ENCODE measurements at regions of chr1 and their contacts with region 1.

Region 1: GRCh38 chr1:118151312-118151937 is 33.6 kb downstream of the SPAG17 start:
- DNase-seq: peak; percentile 41
- ATAC-seq: no peak

Region 2: DNA sequence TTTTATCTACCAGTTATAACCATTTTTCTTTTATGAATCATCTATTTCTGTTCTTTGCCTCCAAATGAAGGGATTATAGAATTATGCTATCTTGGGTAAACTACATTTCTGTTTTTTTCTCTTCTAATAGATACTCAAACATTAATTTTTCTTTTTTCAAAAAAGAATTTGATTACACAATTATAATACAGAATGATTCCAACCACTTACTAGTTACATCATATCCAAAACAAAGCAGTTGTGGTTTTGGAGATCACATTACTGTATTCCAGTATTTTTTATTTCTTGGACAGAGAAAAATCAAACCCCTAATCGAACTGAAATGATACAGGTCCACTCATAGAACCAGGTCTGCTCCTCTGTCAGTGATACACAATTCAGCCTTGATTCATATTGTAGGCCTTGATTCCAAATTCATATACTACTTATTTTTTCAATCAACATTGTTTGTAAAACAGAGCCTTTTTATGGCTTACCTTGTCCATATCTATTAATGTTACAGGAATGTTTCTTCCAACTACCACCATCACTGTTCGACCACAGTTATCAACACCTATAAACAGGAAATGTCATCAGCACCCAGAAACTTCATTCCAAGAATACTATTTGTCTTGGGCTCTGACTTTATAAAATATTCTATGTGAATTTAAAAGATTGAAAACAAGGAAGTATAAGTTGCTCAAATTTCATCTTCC is 265.2 kb before region 1 on chr1:
- intact Hi-C with region 1: no loop called
- DNase-seq: no peak
- ATAC-seq: no peak

Region 3: DNA sequence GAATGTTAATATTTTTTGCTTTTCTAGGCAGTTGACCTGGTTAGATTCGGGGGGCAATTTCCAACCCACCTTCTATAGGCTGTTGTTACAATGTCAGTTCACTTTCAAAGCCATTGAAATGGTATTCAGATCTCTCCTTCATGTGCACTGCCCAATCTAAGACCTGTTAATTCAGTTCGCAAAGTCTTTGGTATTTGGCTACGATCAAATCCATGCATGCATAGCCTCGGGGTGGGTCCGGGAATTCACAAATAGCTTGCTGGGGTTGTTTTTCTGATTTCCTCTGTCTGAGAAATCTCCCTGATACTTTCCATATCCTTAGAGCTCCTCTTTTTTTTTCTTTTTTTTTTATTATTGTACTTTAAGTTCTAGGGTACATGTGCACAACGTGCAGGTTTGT is 286.2 kb after region 1 on chr1:
- intact Hi-C with region 1: no loop called
- DNase-seq: no peak
- ATAC-seq: no peak

Region 4: DNA sequence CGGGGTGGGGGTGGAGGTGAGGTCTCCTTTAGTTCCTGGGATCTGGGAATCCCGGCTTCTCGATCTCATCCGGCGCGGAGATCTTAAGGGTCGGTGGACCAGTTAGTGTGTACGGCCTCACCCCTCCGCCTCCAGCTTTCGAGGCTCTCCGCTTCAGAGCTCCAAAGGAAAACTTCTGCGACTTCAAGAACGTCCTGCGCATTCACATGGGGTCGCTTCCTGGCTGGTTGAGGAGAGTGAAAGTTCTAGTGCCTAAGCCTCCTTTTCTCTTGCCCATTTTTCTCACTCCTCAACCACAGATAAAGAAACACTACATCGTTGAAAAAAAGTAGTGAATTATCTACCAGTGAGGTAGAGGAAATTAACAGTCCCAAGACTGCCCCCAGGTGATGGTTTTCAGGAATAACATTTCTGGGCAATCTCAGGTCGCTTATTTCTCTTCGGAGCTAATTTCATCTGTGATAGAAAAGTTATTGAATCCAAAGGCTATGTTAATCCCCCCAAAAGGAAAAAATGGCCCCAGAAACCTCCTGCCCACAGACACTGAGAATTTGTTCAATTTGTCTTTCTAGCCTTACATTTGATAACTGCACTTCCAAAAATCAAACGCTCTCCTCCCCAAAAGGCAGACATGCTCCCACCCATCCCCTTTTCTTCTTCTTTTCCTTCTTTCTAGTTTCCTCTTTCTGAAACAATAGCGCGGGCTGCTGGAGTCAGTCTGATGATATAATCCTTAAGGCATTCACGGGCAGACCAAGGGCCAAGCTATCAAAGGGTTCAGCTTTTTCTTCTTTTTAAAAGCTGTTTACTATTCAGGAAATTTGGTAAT is 857.3 kb after region 1 on chr1:
- intact Hi-C with region 1: loop called (anchors 10 kb)
- DNase-seq: no peak
- ATAC-seq: peak; percentile 82

Region 5: DNA sequence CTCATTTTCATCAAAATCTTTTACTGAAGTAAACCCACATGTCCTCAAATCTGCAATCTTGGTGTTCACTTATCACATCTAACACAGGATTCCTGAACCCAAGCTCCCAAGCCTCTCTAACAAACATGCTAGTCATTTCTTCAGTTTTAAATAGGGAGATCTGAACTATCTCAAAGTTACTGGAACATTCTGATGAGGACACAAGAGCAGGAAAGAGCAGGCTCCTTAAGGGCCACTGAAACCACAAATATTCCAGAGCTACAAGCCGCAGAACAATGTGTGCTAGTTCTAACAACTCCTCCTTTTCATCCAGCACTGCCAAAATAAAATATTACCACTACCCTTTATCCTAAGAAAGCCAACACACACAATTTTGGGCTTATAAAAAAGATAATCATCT is 950.1 kb after region 1 on chr1:
- intact Hi-C with region 1: no loop called
- DNase-seq: no peak
- ATAC-seq: peak; percentile 95

Measured in left ventricle myocardium superior (tissue), 1 donor.